ENCODE measurements at regions of chr11 and their contacts with region 1.

Region 1: GRCh38 chr11:95849087-95849825 is 59.0 kb downstream of the CEP57 start:
- DNase-seq: peak; percentile 82
- ATAC-seq: peak; percentile 74
- H3K4me3 ChIP-seq: no peak overlapping the region
- H3K27ac ChIP-seq: no peak overlapping the region
- H3K4me1 ChIP-seq: peaks cover 5% of the 10 kb centered on the region
- H3K27me3 ChIP-seq: no peaks in the 10 kb centered on the region
- CTCF ChIP-seq: peak; percentile 57
- POLR2A ChIP-seq: no peak
- RAD21 ChIP-seq: peak; percentile 75

Region 2: GRCh38 chr11:95972060-95972459 is 122.8 kb after region 1 on chr11:
- CTCF ChIA-PET with region 1: no interaction called
- POLR2A ChIA-PET with region 1: no interaction called
- dilution Hi-C with region 1: no loop called
- in situ Hi-C with region 1: no loop called
- intact Hi-C with region 1: loop called (anchors 5 kb)
- DNase-seq: peak; percentile 6
- ATAC-seq: peak; percentile 46; the same call in 1 of the 2 replicates
- H3K4me3 ChIP-seq: no peak overlapping the region
- H3K27ac ChIP-seq: no peak overlapping the region
- H3K4me1 ChIP-seq: peaks cover 1% of the 10 kb centered on the region; the same call in 1 of the 2 replicates
- H3K27me3 ChIP-seq: no peaks in the 10 kb centered on the region
- CTCF ChIP-seq: no peak
- POLR2A ChIP-seq: no peak
- RAD21 ChIP-seq: no peak

Region 3: GRCh38 chr11:96389720-96390487 is 540.6 kb after region 1 on chr11 and contains the starts of genes CCDC82 and JRKL:
- CTCF ChIA-PET with region 1: interaction called, 6 read pairs
- POLR2A ChIA-PET with region 1: no interaction called
- dilution Hi-C with region 1: no loop called
- in situ Hi-C with region 1: loop called (anchors 10 kb)
- intact Hi-C with region 1: no loop called
- DNase-seq: peak; percentile 92
- ATAC-seq: peak; percentile 99
- H3K4me3 ChIP-seq: peak within 1 kb of the TSS; percentile 92
- H3K27ac ChIP-seq: peak within 1 kb of the TSS; percentile 91
- H3K4me1 ChIP-seq: no peaks in the 10 kb centered on the region; the same call in 1 of the 2 replicates
- H3K27me3 ChIP-seq: no peaks in the 10 kb centered on the region
- CTCF ChIP-seq: no peak
- POLR2A ChIP-seq: peak; percentile 83
- RAD21 ChIP-seq: no peak
- total RNA-seq, gene CCDC82: 4.1 and 11.7 TPM in 2 replicates
- total RNA-seq, gene JRKL: 5.9 and 10.3 TPM in 2 replicates

Measured in IMR-90 (cell line).